ENCODE measurements at regions of chr11 and their contacts with region 1.

Region 1: DNA sequence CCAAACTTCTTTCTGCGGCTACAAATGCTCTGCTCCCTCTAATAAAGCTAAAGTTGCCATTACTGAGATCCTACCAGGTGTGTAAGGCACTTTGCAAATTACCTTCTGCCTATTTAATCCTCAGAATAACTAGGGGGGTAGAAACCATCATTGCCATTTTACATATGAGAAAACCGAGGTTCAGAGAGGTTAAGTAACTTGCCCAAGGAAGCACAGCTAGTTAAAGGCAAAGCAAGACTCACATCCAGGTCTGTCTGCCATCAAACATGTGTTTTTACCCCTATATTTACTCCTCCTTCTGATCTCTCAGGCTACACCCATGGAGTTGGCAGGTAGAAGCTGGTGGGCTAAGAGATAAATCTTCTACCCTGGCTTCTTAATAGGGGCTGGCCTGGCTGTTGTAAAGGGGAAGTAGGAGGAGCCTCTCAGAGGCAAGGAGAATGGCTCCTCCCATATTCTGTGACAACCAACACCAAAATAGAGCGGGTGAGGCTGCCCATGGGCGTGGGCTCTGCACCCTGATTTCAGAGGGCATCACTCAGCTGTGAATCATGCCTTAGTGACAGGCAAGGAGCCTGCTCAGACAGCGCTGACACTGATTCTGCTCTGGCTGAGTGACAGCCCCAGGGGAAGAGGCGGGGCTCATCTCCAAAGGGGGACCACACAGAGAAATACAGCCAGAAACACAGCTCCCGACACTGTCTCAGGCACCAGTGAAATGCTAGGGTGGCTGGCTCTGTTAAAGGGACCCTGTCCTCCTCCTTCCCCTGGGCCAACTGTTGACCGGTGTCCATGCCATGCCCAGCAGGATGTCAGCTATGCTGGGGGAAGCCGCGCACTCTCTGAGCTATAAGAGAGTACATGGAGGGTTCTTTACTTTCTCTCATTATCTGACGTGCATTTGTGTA is 106.8 kb downstream of the ABTB2 start:
- DNase-seq: peak; percentile 29 to 80 (median 62)
- ATAC-seq: peak; percentile 89 to 98 (median 95)
- H3K4me3 ChIP-seq: peak overlapping the region; percentile 26 to 49
- H3K4me3 Mint-ChIP-seq: peak overlapping the region; percentile 15 to 78 (median 53)
- H3K27ac ChIP-seq: no peak overlapping the region
- H3K27ac Mint-ChIP-seq: peak overlapping the region in 1 of 2 donors; percentile 44
- H3K4me1 ChIP-seq: peaks cover 40 to 56% of the 10 kb centered on the region in 2 experiments
- H3K4me1 Mint-ChIP-seq: peaks cover 52 to 62% (median 62%) of the 10 kb centered on the region in 3 donors
- H3K27me3 ChIP-seq: peaks cover 0 to 19% of the 10 kb centered on the region in 2 experiments
- H3K27me3 Mint-ChIP-seq: peaks cover 0 to 6% of the 10 kb centered on the region in 2 donors

Region 2: DNA sequence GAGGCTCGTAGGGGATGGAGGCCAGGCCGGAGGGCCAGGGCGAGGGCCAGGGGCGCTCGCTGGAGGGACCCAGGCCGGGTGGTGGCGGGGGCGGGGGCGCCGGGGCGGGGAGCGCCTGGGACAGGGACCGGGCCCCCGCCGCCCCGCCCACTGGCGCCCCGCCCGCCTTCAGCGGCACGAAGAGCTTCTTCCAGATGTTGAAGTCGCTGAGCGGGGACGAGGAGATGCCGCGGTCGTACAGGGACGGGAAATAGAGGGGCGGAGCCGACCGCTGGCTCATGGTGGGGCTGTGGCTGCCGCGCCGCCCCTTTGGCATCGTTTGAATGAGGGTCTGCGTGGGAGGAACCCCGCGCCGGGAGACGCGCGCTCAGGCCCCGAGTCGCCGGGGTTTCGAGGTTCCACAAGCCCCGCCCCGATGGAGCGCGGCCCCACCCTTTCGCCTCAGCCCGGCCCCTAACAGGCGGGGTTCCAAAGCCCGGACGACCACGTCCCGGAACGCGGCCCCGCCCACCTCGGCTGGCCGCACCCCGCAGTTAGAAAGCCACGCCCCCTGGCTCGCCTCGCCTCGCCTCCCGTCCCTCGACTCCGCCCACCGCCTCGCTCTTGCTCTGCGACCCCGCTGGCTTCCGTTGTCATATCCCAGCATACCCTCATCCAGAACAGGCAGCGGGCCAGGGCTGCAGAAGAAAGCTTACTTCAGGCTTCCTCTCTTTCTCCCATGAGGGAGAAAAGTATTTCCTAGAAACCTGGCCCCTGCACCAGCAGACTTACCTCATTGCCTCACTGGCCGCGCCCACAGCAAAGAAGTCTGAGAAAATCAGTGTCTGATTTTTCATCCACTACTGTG is 550.3 kb before region 1 on chr11 and contains the start of gene C11orf91:
- CTCF ChIA-PET with region 1: no interaction called
- POLR2A ChIA-PET with region 1: no interaction called
- DNase-seq: peak; percentile 80 to 97 (median 87)
- ATAC-seq: peak; percentile 90 to 96 (median 94)
- H3K4me3 ChIP-seq: peak within 1 kb of the TSS; percentile 64 to 76
- H3K4me3 Mint-ChIP-seq: peak within 1 kb of the TSS; percentile 86 to 92 (median 88)
- H3K27ac ChIP-seq: no peak within 1 kb of the TSS
- H3K27ac Mint-ChIP-seq: peak within 1 kb of the TSS; percentile 1 to 63
- H3K4me1 ChIP-seq: peaks cover 0 to 13% of the 10 kb centered on the region in 2 experiments
- H3K4me1 Mint-ChIP-seq: peaks cover 16 to 31% (median 19%) of the 10 kb centered on the region in 3 donors
- H3K27me3 ChIP-seq: peaks cover 0 to 10% of the 10 kb centered on the region in 2 experiments
- H3K27me3 Mint-ChIP-seq: peaks cover 10 to 13% of the 10 kb centered on the region in 2 donors
- total RNA-seq, gene C11orf91: 0.95 TPM in 1 of 5 donors, not detected in the others

Region 3: GRCh38 chr11:34185926-34186841 is 64.8 kb before region 1 on chr11:
- CTCF ChIA-PET with region 1: interaction called in 1 of 2 experiments, 9 read pairs
- POLR2A ChIA-PET with region 1: interaction called in 1 of 2 experiments, 14 read pairs
- DNase-seq: no peak
- ATAC-seq: no peak
- H3K4me3 ChIP-seq: no peak overlapping the region
- H3K4me3 Mint-ChIP-seq: no peak overlapping the region
- H3K27ac ChIP-seq: no peak overlapping the region
- H3K27ac Mint-ChIP-seq: no peak overlapping the region
- H3K4me1 ChIP-seq: no peaks in the 10 kb centered on the region
- H3K4me1 Mint-ChIP-seq: no peaks in the 10 kb centered on the region
- H3K27me3 ChIP-seq: peaks cover 0 to 4% of the 10 kb centered on the region in 2 experiments
- H3K27me3 Mint-ChIP-seq: peaks cover 0 to 1% of the 10 kb centered on the region in 2 donors

Measured in T-cell (primary cell).